PC-9 (cell line): ENCODE measurements at regions of chr7 and their contacts with region 1.

Region 1: DNA sequence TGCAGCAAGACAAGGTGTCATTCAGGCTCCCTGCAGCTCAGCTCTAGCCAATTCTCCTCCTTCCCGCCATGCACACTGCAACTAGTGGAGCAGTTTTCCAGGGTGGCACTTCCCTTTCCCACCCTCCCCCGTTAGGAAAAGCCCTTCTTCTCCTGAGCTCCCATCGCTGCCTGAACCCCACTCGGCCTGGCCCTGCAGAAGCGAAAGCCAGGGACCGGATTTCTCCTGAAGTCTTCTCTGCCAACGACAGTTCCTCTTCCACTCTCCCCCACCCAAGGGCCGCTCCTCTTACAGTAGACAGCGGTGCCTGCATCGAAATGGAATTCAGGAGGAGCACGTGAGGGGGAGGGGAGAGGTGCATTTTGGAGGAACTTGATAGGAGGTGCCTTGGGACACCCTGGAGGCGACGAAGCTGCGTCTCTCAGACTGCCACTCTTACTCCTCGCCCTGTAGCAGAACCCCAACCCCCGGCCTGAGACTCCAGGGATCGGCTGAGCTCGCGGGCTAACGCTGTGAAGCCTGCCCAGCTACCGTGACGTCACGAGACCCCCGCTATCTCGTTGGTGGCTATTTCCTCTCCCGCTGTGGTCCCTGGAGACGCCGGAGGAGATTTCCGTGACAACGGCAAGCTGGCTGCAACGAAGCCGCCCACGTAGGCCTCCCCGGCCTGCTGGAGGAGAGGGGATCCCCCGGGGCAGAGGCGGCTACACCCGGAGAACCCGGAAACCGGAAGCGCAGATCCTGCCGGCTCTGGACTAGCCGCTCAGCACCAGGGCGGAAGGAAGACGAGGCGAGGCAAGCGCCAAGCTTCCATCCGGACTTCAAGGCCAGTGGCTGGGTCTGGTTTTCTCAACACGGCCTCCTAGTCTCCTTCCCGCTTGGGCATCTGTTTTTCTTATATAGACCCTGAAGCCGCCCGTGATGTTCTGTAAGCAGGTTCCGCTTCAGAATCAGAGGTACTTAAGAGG is 109.7 kb downstream of the RALA start:
- DNase-seq: peak; percentile 81 to 86
- H3K4me3 ChIP-seq: peak overlapping the region; percentile 61
- H3K27ac ChIP-seq: peak overlapping the region; percentile 64
- H3K4me1 ChIP-seq: peaks cover 17% of the 10 kb centered on the region
- H3K27me3 ChIP-seq: no peaks in the 10 kb centered on the region
- CTCF ChIP-seq: no peak

Region 2: GRCh38 chr7:39623018-39623731 is 109.9 kb before region 1 on chr7 and contains the start of gene RALA:
- CTCF ChIA-PET with region 1: no interaction called
- POLR2A ChIA-PET with region 1: interaction called, 4 read pairs
- intact Hi-C with region 1: loop called (anchors 1 kb)
- DNase-seq: peak; percentile 90 to 96
- H3K4me3 ChIP-seq: peak within 1 kb of the TSS; percentile 75
- H3K27ac ChIP-seq: peak within 1 kb of the TSS; percentile 87
- H3K4me1 ChIP-seq: peaks cover 42% of the 10 kb centered on the region
- H3K27me3 ChIP-seq: no peaks in the 10 kb centered on the region
- CTCF ChIP-seq: no peak
- total RNA-seq, gene RALA: 34.3 and 36.8 TPM in 2 replicates

Region 3: DNA sequence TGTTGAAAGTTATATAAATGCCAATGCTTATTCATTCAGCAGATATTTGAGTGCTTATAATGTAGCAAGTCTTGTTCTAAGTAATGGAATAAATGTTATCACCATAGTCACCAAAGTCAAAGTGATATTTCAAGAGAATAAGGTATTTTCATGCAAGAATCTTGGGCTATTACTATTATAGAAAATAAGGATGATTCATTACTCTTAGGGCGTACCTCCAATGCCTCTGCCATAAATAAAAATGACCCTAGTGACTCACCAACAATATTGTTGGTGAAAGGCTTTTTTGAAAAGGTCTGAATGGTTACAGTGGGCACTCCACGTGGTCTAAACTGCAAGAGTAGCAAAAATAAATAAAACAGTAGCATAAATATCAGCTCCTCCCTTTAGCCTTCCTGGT is 41.3 kb before region 1 on chr7:
- CTCF ChIA-PET with region 1: no interaction called
- POLR2A ChIA-PET with region 1: interaction called, 12 read pairs
- intact Hi-C with region 1: no loop called
- DNase-seq: no peak
- H3K4me3 ChIP-seq: no peak overlapping the region
- H3K27ac ChIP-seq: no peak overlapping the region
- H3K4me1 ChIP-seq: no peaks in the 10 kb centered on the region
- H3K27me3 ChIP-seq: no peaks in the 10 kb centered on the region
- CTCF ChIP-seq: no peak

Region 4: DNA sequence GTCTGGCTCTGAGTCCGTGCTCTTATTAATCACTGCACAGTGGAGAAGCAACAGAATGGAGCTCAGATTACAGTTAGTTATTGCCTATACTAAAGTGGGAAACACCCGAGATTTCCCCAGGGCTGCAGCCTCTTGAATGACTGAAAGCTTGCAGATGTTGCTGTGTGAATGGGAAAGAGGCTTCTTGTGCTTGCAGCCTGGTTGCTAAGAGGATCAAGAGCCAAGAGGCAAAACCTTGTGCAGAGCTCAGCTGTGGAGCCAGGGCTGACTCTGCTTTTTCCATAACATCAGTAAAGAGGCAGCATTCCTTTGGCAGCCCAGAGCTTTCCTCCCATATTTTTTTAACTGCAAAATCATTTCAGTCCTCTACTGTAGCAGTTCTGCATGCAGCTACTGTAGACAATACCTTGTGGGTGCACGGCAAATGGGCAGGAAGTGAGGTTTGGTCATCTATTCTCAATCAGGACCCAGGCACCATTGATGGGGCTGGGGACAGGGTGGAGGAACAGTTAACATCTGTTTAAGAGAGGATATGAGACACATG is 23.3 kb before region 1 on chr7:
- CTCF ChIA-PET with region 1: interaction called, 4 read pairs
- POLR2A ChIA-PET with region 1: interaction called, 14 read pairs
- intact Hi-C with region 1: no loop called
- DNase-seq: no peak
- H3K4me3 ChIP-seq: no peak overlapping the region
- H3K27ac ChIP-seq: no peak overlapping the region
- H3K4me1 ChIP-seq: no peaks in the 10 kb centered on the region
- H3K27me3 ChIP-seq: no peaks in the 10 kb centered on the region
- CTCF ChIP-seq: no peak

Region 5: DNA sequence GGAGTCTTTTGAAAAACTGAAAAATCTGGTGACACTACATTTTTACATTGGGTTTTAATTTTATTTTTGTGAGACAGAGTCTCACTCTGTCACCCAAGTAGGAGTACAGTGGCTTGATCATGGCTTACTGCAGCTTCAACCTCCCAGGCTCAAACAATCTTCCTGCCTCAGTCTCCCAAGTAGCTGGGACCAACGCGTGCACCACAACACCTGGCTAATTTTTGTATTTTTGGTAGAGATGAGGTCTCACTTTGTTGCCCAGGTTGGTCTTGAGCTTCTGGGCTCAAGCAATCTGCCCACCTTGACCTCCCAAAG is 389.8 kb after region 1 on chr7:
- CTCF ChIA-PET with region 1: no interaction called
- POLR2A ChIA-PET with region 1: no interaction called
- intact Hi-C with region 1: no loop called
- DNase-seq: no peak
- H3K4me3 ChIP-seq: no peak overlapping the region
- H3K27ac ChIP-seq: no peak overlapping the region
- H3K4me1 ChIP-seq: peaks cover 9% of the 10 kb centered on the region
- H3K27me3 ChIP-seq: no peaks in the 10 kb centered on the region
- CTCF ChIP-seq: no peak

Region 6: DNA sequence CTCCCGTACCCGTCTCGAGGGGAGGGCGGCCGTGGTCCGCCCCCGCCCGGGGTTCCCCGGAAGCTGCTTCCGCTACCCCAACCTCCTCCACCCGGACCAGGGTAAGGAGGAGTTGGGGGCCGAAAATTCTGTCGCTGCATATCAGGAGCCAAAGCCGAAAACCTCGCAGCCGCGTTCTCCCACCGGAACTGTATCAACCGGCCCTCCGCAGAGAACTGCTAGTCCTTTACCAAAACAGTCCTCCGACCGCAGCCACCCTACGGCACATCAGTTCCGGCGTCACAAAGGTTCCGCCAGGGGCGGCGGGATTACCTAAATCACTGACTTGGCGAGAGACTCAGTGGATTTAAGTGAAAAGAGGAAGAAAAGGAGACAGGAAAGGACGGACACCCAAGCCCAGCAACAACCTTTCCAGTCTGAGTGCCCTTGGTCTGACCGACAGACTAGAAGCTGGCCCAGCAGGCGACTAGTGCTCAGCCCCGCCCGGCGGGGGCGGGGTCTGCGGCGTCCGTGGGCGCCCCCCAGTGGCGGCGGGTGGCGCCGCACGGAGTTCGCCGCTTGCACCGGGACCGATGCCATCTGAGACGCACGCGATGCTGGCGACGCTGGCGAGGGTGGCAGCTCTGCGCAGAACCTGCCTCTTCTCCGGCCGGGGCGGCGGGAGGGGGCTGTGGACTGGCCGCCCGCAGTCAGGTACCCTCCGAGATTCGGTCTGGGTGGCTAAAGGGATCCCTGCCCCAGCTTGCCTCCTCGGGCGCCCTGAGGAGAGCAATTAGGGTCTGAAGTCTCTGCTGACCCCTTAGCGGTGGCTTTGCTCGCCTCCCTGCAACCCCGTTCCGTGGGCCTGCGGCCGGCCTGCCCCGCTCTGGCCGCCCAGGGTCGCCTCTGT is 401.6 kb after region 1 on chr7 and contains the starts of genes MPLKIP and SUGCT:
- CTCF ChIA-PET with region 1: no interaction called
- POLR2A ChIA-PET with region 1: no interaction called
- intact Hi-C with region 1: loop called (anchors 5 kb)
- DNase-seq: peak; percentile 80 to 90
- H3K4me3 ChIP-seq: peak within 1 kb of the TSS; percentile 97
- H3K27ac ChIP-seq: peak within 1 kb of the TSS; percentile 75
- H3K4me1 ChIP-seq: peaks cover 17% of the 10 kb centered on the region
- H3K27me3 ChIP-seq: no peaks in the 10 kb centered on the region
- CTCF ChIP-seq: peak; percentile 99
- total RNA-seq, gene MPLKIP: 76.0 and 79.2 TPM in 2 replicates
- total RNA-seq, gene SUGCT: 2.7 and 3.5 TPM in 2 replicates

Region 7: GRCh38 chr7:40716052-40716451 is 982.9 kb after region 1 on chr7:
- CTCF ChIA-PET with region 1: no interaction called
- POLR2A ChIA-PET with region 1: interaction called, 11 read pairs
- intact Hi-C with region 1: no loop called
- DNase-seq: no peak
- H3K4me3 ChIP-seq: no peak overlapping the region
- H3K27ac ChIP-seq: no peak overlapping the region
- H3K4me1 ChIP-seq: no peaks in the 10 kb centered on the region
- H3K27me3 ChIP-seq: no peaks in the 10 kb centered on the region
- CTCF ChIP-seq: no peak